ENCODE measurements at regions of chr20 and their contacts with region 1.

Region 1: GRCh38 chr20:10427060-10427692 is 6.8 kb downstream of the MKKS start:
- DNase-seq: peak in 5 of 9 donors; percentile 13 to 28 (median 23)
- ATAC-seq: peak; percentile 58
- H3K4me3 ChIP-seq: no peak overlapping the region
- H3K4me3 Mint-ChIP-seq: no peak overlapping the region
- H3K27ac ChIP-seq: no peak overlapping the region
- H3K27ac Mint-ChIP-seq: peak overlapping the region in 2 of 9 donors; percentile 35 to 52
- H3K4me1 ChIP-seq: no peaks in the 10 kb centered on the region
- H3K4me1 Mint-ChIP-seq: peaks cover 24 to 60% (median 46%) of the 10 kb centered on the region in 7 donors
- H3K27me3 ChIP-seq: no peaks in the 10 kb centered on the region
- H3K27me3 Mint-ChIP-seq: no peaks in the 10 kb centered on the region

Region 2: DNA sequence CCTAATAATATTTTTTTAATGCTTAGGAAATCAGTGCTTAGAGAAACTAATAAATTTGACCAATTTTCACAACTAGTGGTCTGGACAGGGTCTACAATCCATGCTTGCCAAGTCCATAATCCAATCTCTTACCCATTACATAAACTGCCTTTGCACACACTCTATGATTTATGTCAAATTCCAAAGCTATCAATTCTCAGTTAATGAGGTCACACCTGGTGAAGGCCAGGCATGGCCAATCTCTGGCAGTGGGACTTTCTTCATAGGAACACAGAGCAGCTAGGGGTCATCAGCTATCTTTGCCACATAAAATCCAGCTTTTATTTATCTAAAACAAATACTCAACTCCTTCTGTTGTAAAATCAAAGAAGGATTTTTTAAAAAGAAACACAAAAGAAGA is 609.5 kb before region 1 on chr20:
- CTCF ChIA-PET with region 1: no interaction called
- POLR2A ChIA-PET with region 1: no interaction called
- intact Hi-C with region 1: no loop called
- DNase-seq: no peak
- ATAC-seq: no peak
- H3K4me3 ChIP-seq: no peak overlapping the region
- H3K4me3 Mint-ChIP-seq: no peak overlapping the region
- H3K27ac ChIP-seq: no peak overlapping the region
- H3K27ac Mint-ChIP-seq: no peak overlapping the region
- H3K4me1 ChIP-seq: no peaks in the 10 kb centered on the region
- H3K4me1 Mint-ChIP-seq: no peaks in the 10 kb centered on the region
- H3K27me3 ChIP-seq: no peaks in the 10 kb centered on the region
- H3K27me3 Mint-ChIP-seq: no peaks in the 10 kb centered on the region

Region 3: DNA sequence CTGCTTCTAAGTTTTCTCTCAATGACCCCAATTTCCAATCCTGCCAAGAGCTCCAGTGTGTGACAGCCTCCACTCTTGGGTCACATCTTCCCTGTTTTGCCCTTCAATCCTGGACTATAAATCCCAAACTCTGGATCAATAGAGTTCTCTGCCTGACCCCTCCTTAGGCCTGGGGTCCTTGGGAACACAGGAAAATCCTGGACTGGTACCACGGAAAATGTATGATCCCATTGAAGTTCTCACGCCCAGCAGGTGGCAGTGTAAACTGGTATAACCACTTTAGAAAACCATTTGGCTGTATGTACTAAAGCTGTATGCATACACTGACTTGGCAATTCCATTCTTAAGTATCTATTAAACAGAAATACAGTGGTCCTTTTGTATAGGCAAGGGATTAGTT is 110.6 kb before region 1 on chr20:
- CTCF ChIA-PET with region 1: no interaction called
- POLR2A ChIA-PET with region 1: no interaction called
- intact Hi-C with region 1: loop called in 1 of 2 experiments (anchors 5 kb)
- DNase-seq: no peak
- ATAC-seq: no peak
- H3K4me3 ChIP-seq: no peak overlapping the region
- H3K4me3 Mint-ChIP-seq: no peak overlapping the region
- H3K27ac ChIP-seq: no peak overlapping the region
- H3K27ac Mint-ChIP-seq: no peak overlapping the region
- H3K4me1 ChIP-seq: no peaks in the 10 kb centered on the region
- H3K4me1 Mint-ChIP-seq: peaks cover 0 to 2% (median 0%) of the 10 kb centered on the region in 7 donors
- H3K27me3 ChIP-seq: no peaks in the 10 kb centered on the region
- H3K27me3 Mint-ChIP-seq: peaks cover 9 to 33% (median 28%) of the 10 kb centered on the region in 5 donors

Region 4: DNA sequence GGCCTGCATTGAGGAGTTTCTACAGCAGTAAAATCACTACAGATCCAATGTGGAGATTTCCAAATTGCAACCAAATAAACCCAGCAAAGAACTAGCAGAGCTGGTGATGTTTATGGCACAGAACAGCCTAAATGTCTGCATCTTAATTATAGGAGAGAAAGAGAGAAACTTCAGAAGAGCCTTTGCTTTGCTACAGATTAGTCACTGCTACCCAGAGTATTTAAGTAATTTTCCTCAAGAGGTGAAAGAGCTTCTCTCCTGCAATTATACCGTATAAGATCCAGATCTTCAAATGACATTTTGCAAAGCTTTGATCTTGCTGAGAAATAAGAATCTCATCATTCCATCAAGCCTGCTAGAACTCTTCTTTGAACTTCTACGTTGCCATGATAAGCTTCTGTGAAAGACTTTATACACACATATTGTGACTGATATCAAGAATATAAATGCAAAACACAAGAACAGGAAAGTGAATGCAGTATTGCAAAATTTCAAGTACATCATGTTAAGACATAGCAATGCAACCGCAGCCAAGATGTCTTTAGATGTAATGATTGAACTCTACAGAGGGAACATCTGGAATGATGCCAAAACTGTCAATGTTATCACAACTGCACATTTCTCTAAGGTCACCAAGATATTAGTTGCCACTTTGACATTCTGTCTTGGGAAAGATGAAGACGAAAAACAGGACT is 41.2 kb before region 1 on chr20:
- CTCF ChIA-PET with region 1: no interaction called
- POLR2A ChIA-PET with region 1: no interaction called
- intact Hi-C with region 1: no loop called
- DNase-seq: no peak
- ATAC-seq: no peak
- H3K4me3 ChIP-seq: no peak overlapping the region
- H3K4me3 Mint-ChIP-seq: no peak overlapping the region
- H3K27ac ChIP-seq: no peak overlapping the region
- H3K27ac Mint-ChIP-seq: no peak overlapping the region
- H3K4me1 ChIP-seq: no peaks in the 10 kb centered on the region
- H3K4me1 Mint-ChIP-seq: no peaks in the 10 kb centered on the region
- H3K27me3 ChIP-seq: no peaks in the 10 kb centered on the region
- H3K27me3 Mint-ChIP-seq: peaks cover 5 to 9% (median 7%) of the 10 kb centered on the region in 5 donors